Naive thymus-derived CD4-positive, alpha-beta T cell (primary cell): ENCODE measurements at regions of chr5 and their contacts with region 1.

Region 1: DNA sequence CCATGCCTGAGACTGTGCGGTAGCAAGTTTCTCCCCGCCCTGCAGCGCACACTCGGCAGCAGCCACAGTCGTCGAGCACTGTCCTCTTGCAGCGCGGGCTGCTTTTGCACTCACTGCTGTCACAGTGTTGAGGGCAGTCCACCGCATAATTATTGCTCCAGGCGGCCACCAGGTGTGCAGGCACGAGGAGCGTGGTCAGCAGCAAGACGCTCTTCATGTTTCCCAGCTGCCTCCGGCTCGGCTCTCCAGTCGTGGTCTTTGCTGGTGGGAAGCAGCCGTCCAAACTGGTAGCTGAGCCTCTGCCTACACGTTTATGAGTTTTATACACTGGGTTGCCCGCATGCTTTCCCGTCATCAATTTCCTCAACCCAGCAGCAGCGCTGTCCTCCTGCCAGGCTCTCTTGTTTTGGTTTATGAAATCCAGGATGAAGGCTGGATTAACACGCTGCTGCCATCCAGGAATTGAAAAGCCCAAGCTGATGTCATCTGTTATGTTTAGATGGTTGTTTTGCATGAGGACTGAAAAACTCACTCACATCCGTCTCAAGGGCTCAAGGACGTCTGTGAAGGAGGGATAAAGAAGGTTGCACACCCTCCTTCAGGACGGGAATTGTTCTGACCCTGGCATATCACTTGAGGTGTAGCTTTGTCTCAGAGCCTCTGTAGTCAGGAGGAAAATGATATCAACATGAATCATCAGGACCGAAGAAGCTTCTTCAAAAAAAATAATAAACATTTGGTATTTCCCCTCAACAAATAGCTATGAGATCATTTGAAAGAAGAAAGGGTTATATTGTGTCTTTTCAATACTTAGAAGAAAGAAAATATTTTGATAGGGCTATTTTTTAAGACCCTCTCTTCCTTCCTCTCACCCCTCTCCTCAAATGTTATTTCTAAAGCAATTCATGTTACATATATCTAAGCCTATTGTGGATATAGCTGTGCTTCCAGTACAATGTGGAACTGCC is at the start of gene ESM1:
- DNase-seq: peak in 1 of 9 donors; percentile 5
- ATAC-seq: peak; percentile 36
- H3K4me3 ChIP-seq: no peak within 1 kb of the TSS
- H3K4me3 Mint-ChIP-seq: peak within 1 kb of the TSS; percentile 11 to 68 (median 47)
- H3K27ac ChIP-seq: no peak within 1 kb of the TSS
- H3K27ac Mint-ChIP-seq: peak within 1 kb of the TSS in 2 of 9 donors; percentile 52 to 77
- H3K4me1 ChIP-seq: peaks cover 15 to 37% of the 10 kb centered on the region in 2 donors
- H3K4me1 Mint-ChIP-seq: peaks cover 18 to 65% (median 54%) of the 10 kb centered on the region in 7 donors
- H3K27me3 ChIP-seq: no peaks in the 10 kb centered on the region
- H3K27me3 Mint-ChIP-seq: peaks cover 0 to 36% (median 4%) of the 10 kb centered on the region in 5 donors
- total RNA-seq, gene ESM1: 0.39 to 1.2 TPM in 2 of 5 experiments, not detected in the others

Region 2: DNA sequence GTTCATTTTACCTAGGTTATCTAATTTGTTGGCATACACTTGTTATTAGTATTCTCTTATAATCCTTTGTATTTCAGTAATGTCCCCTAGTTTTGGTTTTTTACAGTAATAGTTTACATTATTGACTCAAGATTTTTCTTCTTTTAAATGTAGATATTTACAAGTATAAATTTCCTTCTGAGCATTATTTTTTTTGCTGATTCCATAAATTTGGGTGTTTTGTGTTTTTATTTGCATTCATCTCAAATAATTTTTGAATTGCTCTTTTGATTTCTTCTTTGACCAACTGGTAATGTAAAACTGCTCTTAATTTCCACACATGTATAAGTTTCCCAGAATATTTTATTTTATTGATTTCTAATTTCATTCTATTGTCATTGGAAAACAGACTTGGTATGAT is 68.3 kb before region 1 on chr5:
- CTCF ChIA-PET with region 1: no interaction called
- POLR2A ChIA-PET with region 1: no interaction called
- intact Hi-C with region 1: no loop called
- DNase-seq: no peak
- ATAC-seq: no peak
- H3K4me3 ChIP-seq: no peak overlapping the region
- H3K4me3 Mint-ChIP-seq: no peak overlapping the region
- H3K27ac ChIP-seq: no peak overlapping the region
- H3K27ac Mint-ChIP-seq: no peak overlapping the region
- H3K4me1 ChIP-seq: no peaks in the 10 kb centered on the region
- H3K4me1 Mint-ChIP-seq: peaks cover 0 to 3% (median 0%) of the 10 kb centered on the region in 7 donors
- H3K27me3 ChIP-seq: no peaks in the 10 kb centered on the region
- H3K27me3 Mint-ChIP-seq: peaks cover 5 to 81% (median 24%) of the 10 kb centered on the region in 5 donors

Region 3: DNA sequence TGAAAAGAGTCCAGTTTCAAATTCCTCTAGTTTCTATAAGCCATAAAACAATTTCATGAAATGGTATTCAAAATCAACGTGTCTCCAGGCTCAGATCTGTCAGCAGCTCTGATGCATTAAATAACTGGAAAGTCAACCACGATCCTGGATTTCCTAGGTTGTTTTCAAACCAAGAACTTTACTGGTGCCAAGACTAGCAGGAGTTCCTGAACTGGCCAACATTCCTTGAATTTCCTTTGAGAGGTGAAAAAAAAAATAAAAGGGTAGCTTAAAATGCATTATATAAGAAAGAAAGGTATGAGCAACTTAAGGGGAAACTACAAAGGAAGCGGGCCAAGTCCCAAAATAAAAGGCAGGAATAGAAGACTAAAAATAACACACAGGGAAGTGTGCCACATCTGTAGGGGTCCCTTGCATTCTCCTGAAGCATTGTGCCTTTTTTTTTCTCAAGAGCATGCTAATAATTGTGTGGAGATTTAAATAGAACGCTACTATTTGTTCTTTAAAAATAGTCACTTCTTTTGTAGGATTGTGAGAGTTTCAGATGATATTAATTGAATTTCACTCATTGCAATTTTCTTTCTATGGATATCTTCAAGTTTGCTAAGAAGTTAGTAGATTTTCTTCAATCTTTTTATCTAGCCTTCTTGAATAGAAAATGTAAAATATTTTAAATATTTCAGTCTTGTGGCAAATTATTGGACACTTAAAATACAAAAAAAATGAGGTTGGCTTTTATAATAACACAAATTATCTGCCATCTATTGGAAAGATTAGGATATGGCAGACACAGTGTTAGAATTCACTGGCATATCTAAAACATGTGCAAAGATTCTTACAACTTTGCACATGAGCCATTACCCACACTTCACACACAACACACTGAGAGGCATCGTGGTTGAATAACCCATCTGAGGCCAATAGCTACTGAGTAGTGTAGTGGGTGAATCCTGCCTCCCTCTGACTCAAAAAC is 15.4 kb before region 1 on chr5:
- CTCF ChIA-PET with region 1: no interaction called
- POLR2A ChIA-PET with region 1: no interaction called
- intact Hi-C with region 1: no loop called
- DNase-seq: no peak
- ATAC-seq: no peak
- H3K4me3 ChIP-seq: no peak overlapping the region
- H3K4me3 Mint-ChIP-seq: no peak overlapping the region
- H3K27ac ChIP-seq: no peak overlapping the region
- H3K27ac Mint-ChIP-seq: no peak overlapping the region
- H3K4me1 ChIP-seq: no peaks in the 10 kb centered on the region
- H3K4me1 Mint-ChIP-seq: peaks cover 0 to 12% (median 0%) of the 10 kb centered on the region in 7 donors
- H3K27me3 ChIP-seq: no peaks in the 10 kb centered on the region
- H3K27me3 Mint-ChIP-seq: peaks cover 0 to 27% (median 0%) of the 10 kb centered on the region in 5 donors

Region 4: GRCh38 chr5:55021410-55021809 is 35.8 kb after region 1 on chr5:
- CTCF ChIA-PET with region 1: no interaction called
- POLR2A ChIA-PET with region 1: interaction called, 3 read pairs
- intact Hi-C with region 1: loop called in 1 of 2 experiments (anchors 2 kb)
- DNase-seq: no peak
- ATAC-seq: no peak
- H3K4me3 ChIP-seq: no peak overlapping the region
- H3K4me3 Mint-ChIP-seq: peak overlapping the region in 2 of 10 donors; percentile 19 to 30
- H3K27ac ChIP-seq: no peak overlapping the region
- H3K27ac Mint-ChIP-seq: peak overlapping the region in 1 of 9 donors; percentile 31
- H3K4me1 ChIP-seq: peaks cover 23 to 31% of the 10 kb centered on the region in 2 donors
- H3K4me1 Mint-ChIP-seq: peaks cover 18 to 51% (median 49%) of the 10 kb centered on the region in 7 donors
- H3K27me3 ChIP-seq: no peaks in the 10 kb centered on the region
- H3K27me3 Mint-ChIP-seq: no peaks in the 10 kb centered on the region